ENCODE measurements at regions of chr6 and their contacts with region 1.

Region 1: GRCh38 chr6:70884074-70884983 is 72.5 kb downstream of the B3GAT2 start:
- DNase-seq: peak; percentile 49 to 57
- ATAC-seq: peak; percentile 91 to 98
- H3K4me3 ChIP-seq: no peak overlapping the region
- H3K27ac ChIP-seq: no peak overlapping the region
- H3K4me1 ChIP-seq: no peaks in the 10 kb centered on the region
- CTCF ChIP-seq: peak; percentile 72
- EP300 ChIP-seq: no peak
- POLR2A ChIP-seq: no peak
- RAD21 ChIP-seq: peak; percentile 74 to 75

Region 2: GRCh38 chr6:70310063-70310694 is 574.1 kb before region 1 on chr6:
- CTCF ChIA-PET with region 1: interaction called, 25 read pairs
- POLR2A ChIA-PET with region 1: no interaction called
- DNase-seq: peak in 1 of 2 experiments; percentile 54
- ATAC-seq: peak in 1 of 2 experiments; percentile 64; a peak in 2 of 6 replicates
- H3K4me3 ChIP-seq: no peak overlapping the region
- H3K27ac ChIP-seq: no peak overlapping the region
- H3K4me1 ChIP-seq: no peaks in the 10 kb centered on the region
- CTCF ChIP-seq: peak; percentile 71
- EP300 ChIP-seq: no peak
- POLR2A ChIP-seq: no peak
- RAD21 ChIP-seq: peak; percentile 76 to 79

Region 3: GRCh38 chr6:70520575-70520974 is 363.8 kb before region 1 on chr6:
- CTCF ChIA-PET with region 1: interaction called, 11 read pairs
- POLR2A ChIA-PET with region 1: no interaction called
- DNase-seq: peak; percentile 1 to 3
- ATAC-seq: no peak
- H3K4me3 ChIP-seq: no peak overlapping the region
- H3K27ac ChIP-seq: no peak overlapping the region
- H3K4me1 ChIP-seq: no peaks in the 10 kb centered on the region
- CTCF ChIP-seq: peak; percentile 40
- EP300 ChIP-seq: no peak
- POLR2A ChIP-seq: no peak
- RAD21 ChIP-seq: peak; percentile 48 to 53; a peak in 4 of 5 replicates

Region 4: GRCh38 chr6:70700922-70701876 is 183.1 kb before region 1 on chr6:
- CTCF ChIA-PET with region 1: interaction called, 12 read pairs
- POLR2A ChIA-PET with region 1: no interaction called
- DNase-seq: no peak
- ATAC-seq: no peak
- H3K4me3 ChIP-seq: no peak overlapping the region
- H3K27ac ChIP-seq: no peak overlapping the region
- H3K4me1 ChIP-seq: no peaks in the 10 kb centered on the region
- CTCF ChIP-seq: no peak
- EP300 ChIP-seq: no peak
- POLR2A ChIP-seq: no peak
- RAD21 ChIP-seq: no peak

Region 5: DNA sequence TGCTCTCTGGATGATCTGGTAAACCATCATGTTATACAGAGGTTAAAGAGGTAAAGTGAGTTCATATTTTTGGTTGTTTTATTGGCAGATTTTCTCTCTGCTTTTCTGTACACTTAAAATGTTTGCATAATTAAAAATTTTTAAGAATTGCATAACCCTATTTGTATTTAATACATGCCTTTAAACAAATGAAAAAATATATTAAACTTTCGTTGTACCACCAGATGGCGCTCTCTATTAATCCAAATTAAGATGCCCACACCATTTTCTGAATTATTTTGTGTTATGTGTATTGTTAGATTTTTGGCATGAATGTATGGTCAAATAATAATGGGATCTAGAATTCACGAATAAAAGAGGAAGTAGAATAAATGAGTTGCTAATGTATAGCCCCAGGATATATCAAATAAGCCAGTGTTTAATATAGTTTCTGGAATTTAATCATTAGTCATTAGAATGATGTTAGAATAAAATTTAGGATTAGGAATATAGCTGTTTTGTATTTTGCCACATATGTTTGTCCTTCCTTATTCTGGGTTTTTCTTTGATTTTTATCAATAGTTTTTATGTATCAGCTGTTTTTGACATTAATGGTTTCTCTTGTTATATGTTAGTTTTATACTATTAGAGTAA is 177.7 kb before region 1 on chr6:
- CTCF ChIA-PET with region 1: interaction called, 36 read pairs
- POLR2A ChIA-PET with region 1: no interaction called
- DNase-seq: peak; percentile 7 to 41
- ATAC-seq: no peak
- H3K4me3 ChIP-seq: no peak overlapping the region
- H3K27ac ChIP-seq: no peak overlapping the region
- H3K4me1 ChIP-seq: peaks cover 4% of the 10 kb centered on the region; the same call in 2 of the 3 replicates
- CTCF ChIP-seq: peak; percentile 79
- EP300 ChIP-seq: no peak
- POLR2A ChIP-seq: no peak
- RAD21 ChIP-seq: peak; percentile 52 to 67

Region 6: DNA sequence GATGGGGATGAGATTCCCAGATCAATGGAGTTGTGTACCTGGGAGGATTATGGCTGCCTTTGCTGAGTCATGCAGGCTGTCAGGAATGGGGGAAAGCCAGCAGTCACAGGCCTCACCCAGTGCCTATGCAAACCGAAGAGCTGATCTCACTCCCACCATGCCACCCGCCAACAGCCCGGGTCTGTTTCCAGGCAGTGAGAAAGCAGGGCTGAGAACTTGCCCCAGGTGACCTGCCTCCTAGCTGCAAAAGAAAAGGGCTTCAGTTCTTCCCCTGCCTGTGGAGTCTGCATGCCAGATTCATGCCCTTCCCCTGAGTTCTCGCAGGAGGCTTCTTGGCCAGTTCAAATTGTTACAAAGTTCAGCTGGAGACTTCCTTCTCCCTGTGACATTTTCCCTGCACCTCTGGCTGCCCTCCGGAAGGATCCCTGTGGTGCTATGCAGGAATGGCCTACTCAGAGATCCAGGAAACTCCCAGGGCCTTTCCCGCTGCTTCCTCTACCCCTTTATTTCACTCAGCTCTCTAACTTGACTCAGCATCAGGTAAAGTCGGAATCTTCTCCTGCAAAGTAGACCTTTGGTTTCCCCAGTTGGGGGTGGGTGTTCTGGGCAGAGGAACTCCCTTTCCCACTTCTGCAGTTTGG is 144.0 kb after region 1 on chr6:
- CTCF ChIA-PET with region 1: no interaction called
- POLR2A ChIA-PET with region 1: no interaction called
- DNase-seq: no peak
- ATAC-seq: no peak
- H3K4me3 ChIP-seq: no peak overlapping the region
- H3K27ac ChIP-seq: no peak overlapping the region
- H3K4me1 ChIP-seq: no peaks in the 10 kb centered on the region
- CTCF ChIP-seq: no peak
- EP300 ChIP-seq: no peak
- POLR2A ChIP-seq: no peak
- RAD21 ChIP-seq: no peak